H1 (cell line): ENCODE measurements at regions of chr10 and their contacts with region 1.

Region 1: GRCh38 chr10:70493660-70494234 is 15.2 kb downstream of the PALD1 start:
- DNase-seq: peak in 1 of 2 experiments; percentile 81
- H3K4me3 ChIP-seq: peak overlapping the region in 1 of 4 experiments; percentile 7; a peak in 3 of 8 replicates
- H3K27ac ChIP-seq: peak overlapping the region; percentile 13; the same call in 1 of the 2 replicates
- H3K4me1 ChIP-seq: peaks cover 13 to 31% (median 19%) of the 10 kb centered on the region in 4 experiments
- H3K27me3 ChIP-seq: no peaks in the 10 kb centered on the region
- CTCF ChIP-seq: no peak
- EP300 ChIP-seq: no peak
- POLR2A ChIP-seq: no peak; a peak in 1 of 3 replicates
- RAD21 ChIP-seq: no peak

Region 2: GRCh38 chr10:70355051-70356021 is 138.4 kb before region 1 on chr10:
- CTCF ChIA-PET with region 1: no interaction called
- POLR2A ChIA-PET with region 1: no interaction called
- DNase-seq: no peak
- H3K4me3 ChIP-seq: no peak overlapping the region
- H3K27ac ChIP-seq: no peak overlapping the region
- H3K4me1 ChIP-seq: no peaks in the 10 kb centered on the region
- H3K27me3 ChIP-seq: no peaks in the 10 kb centered on the region
- CTCF ChIP-seq: no peak
- EP300 ChIP-seq: no peak
- POLR2A ChIP-seq: no peak
- RAD21 ChIP-seq: no peak

Region 3: GRCh38 chr10:70508912-70509756 is 15.4 kb after region 1 on chr10:
- CTCF ChIA-PET with region 1: interaction called, 11 read pairs
- POLR2A ChIA-PET with region 1: interaction called, 5 read pairs
- DNase-seq: peak in 1 of 2 experiments; percentile 60
- H3K4me3 ChIP-seq: no peak overlapping the region
- H3K27ac ChIP-seq: no peak overlapping the region
- H3K4me1 ChIP-seq: peaks cover 0 to 26% (median 19%) of the 10 kb centered on the region in 4 experiments; a peak in 6 of 7 replicates
- H3K27me3 ChIP-seq: no peaks in the 10 kb centered on the region; a peak in 2 of 7 replicates
- CTCF ChIP-seq: no peak
- EP300 ChIP-seq: no peak
- POLR2A ChIP-seq: no peak
- RAD21 ChIP-seq: no peak; a peak in 1 of 4 replicates